CD8-positive, alpha-beta T cell (primary cell): ENCODE measurements at regions of chr10 and their contacts with region 1.

Region 1: DNA sequence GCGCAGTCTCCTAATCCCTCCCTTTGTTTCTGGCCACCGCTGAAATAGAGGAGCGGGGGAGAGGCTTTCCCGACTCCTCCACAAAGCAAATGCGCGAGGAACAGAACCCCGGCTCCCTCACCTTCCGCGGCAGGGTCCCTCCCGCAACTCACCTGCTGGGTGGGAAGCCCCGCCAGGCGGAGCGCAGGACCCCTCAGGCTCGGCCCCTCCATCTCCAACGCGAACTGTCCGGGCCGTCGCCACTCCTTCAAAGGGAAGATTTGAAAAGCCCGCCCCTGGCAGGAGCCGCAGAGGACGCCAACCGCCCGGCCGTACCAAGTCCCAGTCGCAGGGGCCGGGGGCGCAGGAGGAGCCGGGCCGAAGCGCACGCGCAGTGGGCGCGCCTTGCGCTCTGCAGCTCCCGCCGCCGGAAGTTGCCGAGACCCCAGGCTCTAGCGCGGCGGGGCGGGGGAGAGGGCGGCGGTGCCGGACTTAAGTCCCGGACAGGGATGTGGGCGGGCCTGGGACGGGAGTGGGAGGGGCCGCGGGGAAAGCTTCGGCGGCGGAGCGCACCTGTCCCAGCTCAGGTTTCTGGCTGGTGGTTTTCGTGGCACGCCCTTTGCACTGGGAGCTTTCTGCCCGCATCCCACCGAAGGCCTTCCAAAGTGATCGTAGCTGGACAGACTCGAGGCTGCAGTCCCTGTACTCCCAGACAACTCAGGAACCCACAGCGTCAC is at the start of gene RTKN2:
- DNase-seq: peak; percentile 34 to 78 (median 55)
- ATAC-seq: peak; percentile 82
- H3K4me3 ChIP-seq: peak within 1 kb of the TSS; percentile 58 to 64
- H3K4me3 Mint-ChIP-seq: peak within 1 kb of the TSS; percentile 80
- H3K27ac ChIP-seq: no peak within 1 kb of the TSS
- H3K27ac Mint-ChIP-seq: no peak within 1 kb of the TSS
- H3K4me1 ChIP-seq: peaks cover 13% of the 10 kb centered on the region
- H3K4me1 Mint-ChIP-seq: peaks cover 10% of the 10 kb centered on the region
- H3K27me3 ChIP-seq: peaks cover 0 to 7% of the 10 kb centered on the region in 2 experiments
- H3K27me3 Mint-ChIP-seq: peaks cover 12% of the 10 kb centered on the region
- CTCF ChIP-seq: no peak
- total RNA-seq, gene RTKN2: 0.49 to 0.61 TPM

Region 2: GRCh38 chr10:62317257-62317656 is 48.7 kb after region 1 on chr10:
- CTCF ChIA-PET with region 1: no interaction called
- POLR2A ChIA-PET with region 1: no interaction called
- intact Hi-C with region 1: no loop called
- DNase-seq: no peak
- ATAC-seq: no peak
- H3K4me3 ChIP-seq: no peak overlapping the region
- H3K4me3 Mint-ChIP-seq: no peak overlapping the region
- H3K27ac ChIP-seq: no peak overlapping the region
- H3K27ac Mint-ChIP-seq: no peak overlapping the region
- H3K4me1 ChIP-seq: no peaks in the 10 kb centered on the region
- H3K4me1 Mint-ChIP-seq: no peaks in the 10 kb centered on the region
- H3K27me3 ChIP-seq: no peaks in the 10 kb centered on the region
- H3K27me3 Mint-ChIP-seq: peaks cover 11% of the 10 kb centered on the region
- CTCF ChIP-seq: no peak

Region 3: GRCh38 chr10:62422068-62422590 is 153.6 kb after region 1 on chr10:
- CTCF ChIA-PET with region 1: no interaction called
- POLR2A ChIA-PET with region 1: no interaction called
- intact Hi-C with region 1: loop called in 1 of 2 experiments (anchors 5 kb)
- DNase-seq: no peak
- ATAC-seq: no peak
- H3K4me3 ChIP-seq: no peak overlapping the region
- H3K4me3 Mint-ChIP-seq: no peak overlapping the region
- H3K27ac ChIP-seq: no peak overlapping the region
- H3K27ac Mint-ChIP-seq: no peak overlapping the region
- H3K4me1 ChIP-seq: no peaks in the 10 kb centered on the region
- H3K4me1 Mint-ChIP-seq: no peaks in the 10 kb centered on the region
- H3K27me3 ChIP-seq: no peaks in the 10 kb centered on the region
- H3K27me3 Mint-ChIP-seq: peaks cover 8% of the 10 kb centered on the region
- CTCF ChIP-seq: no peak